Left colon (tissue), 2 donors: ENCODE measurements at regions of chr7 and their contacts with region 1.

Region 1: GRCh38 chr7:112272921-112273561 is 66.5 kb downstream of the ZNF277 start:
- DNase-seq: peak; percentile 12 to 41
- ATAC-seq: peak; percentile 78

Region 2: GRCh38 chr7:111474723-111475418 is 798.2 kb before region 1 on chr7:
- intact Hi-C with region 1: no loop called
- DNase-seq: no peak
- ATAC-seq: no peak

Region 3: DNA sequence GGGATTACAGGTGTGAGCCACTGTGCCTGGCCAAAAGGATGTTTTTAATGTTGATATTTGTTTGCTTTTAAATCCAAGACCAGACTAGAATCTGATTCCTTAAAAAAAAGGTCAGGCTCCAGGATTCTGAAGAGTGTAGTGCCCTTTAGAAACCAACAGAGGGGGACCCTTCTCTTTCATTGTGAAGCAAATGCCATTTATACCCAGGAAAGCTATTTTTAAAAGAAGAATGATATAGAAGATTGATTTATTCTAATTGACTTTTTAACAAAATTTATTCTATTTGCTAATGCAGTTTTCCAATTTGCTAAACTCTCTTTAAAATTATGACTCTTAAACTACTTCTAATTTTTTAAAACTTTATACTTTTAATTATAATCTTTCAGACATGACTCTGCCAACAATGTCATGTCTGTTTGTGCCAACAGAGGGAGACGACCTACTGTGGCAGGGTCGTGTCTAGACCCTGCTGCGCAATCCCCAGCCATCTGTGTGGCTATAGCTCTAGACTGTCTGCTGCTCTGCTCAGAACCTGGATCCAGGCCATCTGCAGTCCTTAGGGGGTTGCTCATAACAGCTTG is 509.7 kb before region 1 on chr7:
- intact Hi-C with region 1: loop called in 1 of 2 experiments (anchors 10 kb)
- DNase-seq: no peak
- ATAC-seq: peak; percentile 78

Region 4: DNA sequence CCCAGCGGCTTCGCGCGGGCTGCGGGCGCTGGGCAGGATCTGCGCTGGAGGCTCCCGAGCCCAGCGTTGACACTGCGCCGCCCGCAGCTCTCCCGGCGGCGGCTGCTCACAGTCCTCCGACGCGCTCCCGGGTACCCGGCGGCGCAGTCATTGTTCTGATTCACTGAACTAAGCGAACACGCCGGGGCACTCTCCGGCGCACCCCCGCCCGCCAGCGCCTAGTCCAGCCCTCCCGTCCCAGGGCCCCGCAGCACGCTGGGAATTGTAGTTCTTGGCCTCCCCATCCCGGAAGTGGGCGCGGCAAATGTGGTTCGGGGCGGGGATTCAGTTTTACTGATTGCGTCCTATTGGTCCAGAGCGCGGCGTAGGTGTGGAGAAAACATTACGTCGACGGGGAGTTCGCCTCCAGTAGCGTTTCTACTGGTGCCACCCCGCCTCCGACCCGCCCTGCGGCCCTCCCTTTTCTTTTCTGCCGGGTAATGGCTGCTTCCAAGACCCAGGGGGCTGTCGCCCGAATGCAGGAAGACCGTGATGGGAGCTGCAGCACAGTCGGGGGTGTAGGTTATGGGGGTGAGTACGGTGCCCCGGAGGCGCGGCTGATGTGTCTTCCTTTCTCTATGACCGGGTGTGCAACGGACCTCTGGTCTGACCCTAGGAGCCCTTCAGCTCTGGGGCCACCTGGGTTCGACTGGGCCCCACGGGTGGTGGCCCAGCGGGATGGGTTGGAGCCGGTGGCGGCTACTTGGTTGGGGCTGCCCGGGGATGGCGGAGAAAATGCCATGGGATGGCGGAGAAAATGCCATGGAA is 66.6 kb before region 1 on chr7 and contains the starts of genes DOCK4 and ZNF277:
- intact Hi-C with region 1: no loop called
- DNase-seq: peak; percentile 99
- ATAC-seq: peak; percentile 93
- total RNA-seq, gene DOCK4: 6.6 to 11.5 TPM
- total RNA-seq, gene ZNF277: 20.1 to 22.3 TPM